ENCODE measurements at regions of chr17 and their contacts with region 1.

Region 1: DNA sequence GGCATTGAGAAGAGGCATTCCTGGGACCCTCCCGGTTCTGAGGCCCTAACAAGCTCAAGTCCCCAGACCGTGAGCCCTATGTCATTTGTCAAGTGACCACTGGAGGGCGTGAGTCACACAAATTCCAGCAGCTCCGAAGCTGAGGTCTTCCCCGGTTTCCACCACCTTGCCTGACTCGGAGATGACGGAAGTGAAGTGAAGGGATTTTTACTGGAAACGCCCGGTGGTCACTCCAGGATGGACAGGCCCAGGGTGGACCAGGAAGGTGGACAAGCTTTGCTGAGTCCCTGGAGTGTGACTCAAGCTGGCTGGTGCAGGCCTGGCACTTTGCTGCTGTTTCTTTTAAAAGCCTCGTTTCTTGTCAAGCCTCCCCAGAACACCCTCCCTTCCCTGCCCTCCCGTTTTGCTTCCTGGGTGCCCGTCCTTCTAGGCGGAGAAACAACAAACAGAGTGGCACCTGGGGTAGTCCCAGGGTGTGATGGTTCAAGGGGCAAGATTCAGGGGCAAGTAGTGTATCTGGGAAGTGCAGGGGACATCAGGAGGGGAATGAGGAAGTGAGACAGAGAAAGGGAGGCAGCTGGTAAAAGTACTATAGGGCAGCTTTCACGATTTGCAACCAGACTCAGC is 5.3 kb upstream of the NOS2 start:
- DNase-seq: peak; percentile 80 to 84 (median 82)
- H3K4me3 ChIP-seq: peak overlapping the region; percentile 5 to 63
- H3K4me3 Mint-ChIP-seq: peak overlapping the region; percentile 82 to 94 (median 86)
- H3K27ac ChIP-seq: peak overlapping the region; percentile 56
- H3K27ac Mint-ChIP-seq: peak overlapping the region; percentile 87 to 98 (median 93)
- H3K4me1 ChIP-seq: peaks cover 36% of the 10 kb centered on the region
- H3K4me1 Mint-ChIP-seq: peaks cover 21 to 46% (median 37%) of the 10 kb centered on the region in 4 donors
- H3K27me3 ChIP-seq: no peaks in the 10 kb centered on the region
- H3K27me3 Mint-ChIP-seq: no peaks in the 10 kb centered on the region

Region 2: DNA sequence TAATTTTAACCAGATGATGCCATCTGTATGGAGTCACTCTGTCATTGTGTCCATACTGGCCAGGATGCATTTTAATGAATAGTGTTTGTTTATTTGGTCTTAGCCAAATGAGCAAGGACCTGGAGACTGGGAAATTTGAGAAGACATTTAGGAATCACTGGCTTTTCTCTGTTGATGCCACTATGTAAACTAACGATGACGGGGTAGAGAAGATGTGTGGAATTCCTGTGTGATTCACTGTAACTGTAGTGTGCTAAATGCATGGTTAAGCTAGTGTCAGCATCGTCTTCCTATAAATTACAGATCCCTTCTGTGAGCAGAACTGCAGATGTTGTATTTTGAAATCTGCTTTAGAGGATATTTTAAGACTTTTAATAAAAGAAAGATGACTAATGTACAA is 71.9 kb before region 1 on chr17:
- CTCF ChIA-PET with region 1: no interaction called
- POLR2A ChIA-PET with region 1: no interaction called
- intact Hi-C with region 1: no loop called
- DNase-seq: no peak
- H3K4me3 ChIP-seq: no peak overlapping the region
- H3K4me3 Mint-ChIP-seq: no peak overlapping the region
- H3K27ac ChIP-seq: no peak overlapping the region
- H3K27ac Mint-ChIP-seq: no peak overlapping the region
- H3K4me1 ChIP-seq: no peaks in the 10 kb centered on the region
- H3K4me1 Mint-ChIP-seq: peaks cover 0 to 3% (median 0%) of the 10 kb centered on the region in 4 donors
- H3K27me3 ChIP-seq: no peaks in the 10 kb centered on the region
- H3K27me3 Mint-ChIP-seq: peaks cover 12 to 16% of the 10 kb centered on the region in 2 donors

Region 3: DNA sequence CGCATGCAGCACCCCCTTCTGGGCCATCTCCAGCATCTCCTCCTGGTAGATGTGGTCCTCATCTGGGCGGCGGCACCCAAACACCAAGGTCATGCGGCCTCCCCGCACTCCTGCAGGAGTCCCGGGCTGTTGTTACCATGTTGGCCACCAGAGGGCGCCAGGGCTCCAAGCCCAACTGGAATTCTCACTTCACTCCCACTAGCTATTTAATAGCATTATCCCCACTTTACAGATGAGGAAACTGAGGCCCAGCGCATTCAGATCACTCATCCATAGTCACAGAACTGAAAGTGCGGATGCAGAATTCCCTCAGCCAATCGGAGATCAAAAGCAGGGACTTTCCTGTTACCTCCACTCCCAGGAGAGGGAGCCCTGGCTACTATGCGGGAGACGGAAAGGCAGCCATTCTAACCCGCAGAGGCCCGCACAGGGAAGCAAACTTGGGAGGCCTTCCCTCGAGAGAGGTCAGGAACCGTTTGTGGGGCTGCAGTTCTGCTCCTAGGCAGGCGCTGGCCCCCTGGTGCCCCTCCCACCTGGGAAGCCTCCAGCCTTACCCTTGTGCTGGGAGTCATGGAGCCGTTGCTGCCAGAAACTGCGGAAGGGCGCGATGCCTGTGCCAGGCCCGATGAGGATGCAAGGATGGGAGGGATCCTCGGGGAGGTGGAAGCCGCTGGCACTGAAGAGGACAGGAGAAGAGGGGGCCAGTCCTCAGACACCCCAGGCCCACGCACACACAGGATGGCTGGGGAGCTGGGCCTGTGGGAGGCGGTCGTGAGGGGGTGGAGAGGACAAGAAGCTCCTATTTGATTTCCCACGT is 45.4 kb before region 1 on chr17:
- CTCF ChIA-PET with region 1: interaction called, 10 read pairs
- POLR2A ChIA-PET with region 1: no interaction called
- intact Hi-C with region 1: no loop called
- DNase-seq: peak; percentile 40 to 63 (median 50)
- H3K4me3 ChIP-seq: no peak overlapping the region
- H3K4me3 Mint-ChIP-seq: no peak overlapping the region
- H3K27ac ChIP-seq: no peak overlapping the region
- H3K27ac Mint-ChIP-seq: no peak overlapping the region
- H3K4me1 ChIP-seq: no peaks in the 10 kb centered on the region
- H3K4me1 Mint-ChIP-seq: peaks cover 0 to 3% (median 0%) of the 10 kb centered on the region in 4 donors
- H3K27me3 ChIP-seq: no peaks in the 10 kb centered on the region
- H3K27me3 Mint-ChIP-seq: peaks cover 2 to 5% of the 10 kb centered on the region in 2 donors

Region 4: GRCh38 chr17:27834571-27834970 is 28.9 kb after region 1 on chr17:
- CTCF ChIA-PET with region 1: interaction called, 10 read pairs
- POLR2A ChIA-PET with region 1: no interaction called
- intact Hi-C with region 1: no loop called
- DNase-seq: no peak
- H3K4me3 ChIP-seq: no peak overlapping the region
- H3K4me3 Mint-ChIP-seq: no peak overlapping the region
- H3K27ac ChIP-seq: no peak overlapping the region
- H3K27ac Mint-ChIP-seq: no peak overlapping the region
- H3K4me1 ChIP-seq: no peaks in the 10 kb centered on the region
- H3K4me1 Mint-ChIP-seq: no peaks in the 10 kb centered on the region
- H3K27me3 ChIP-seq: no peaks in the 10 kb centered on the region
- H3K27me3 Mint-ChIP-seq: no peaks in the 10 kb centered on the region

Region 5: GRCh38 chr17:27879987-27880608 is 74.5 kb after region 1 on chr17:
- CTCF ChIA-PET with region 1: interaction called, 292 read pairs
- POLR2A ChIA-PET with region 1: interaction called, 44 read pairs
- intact Hi-C with region 1: loop called (anchors 1 kb)
- DNase-seq: peak; percentile 50 to 62 (median 54)
- H3K4me3 ChIP-seq: no peak overlapping the region
- H3K4me3 Mint-ChIP-seq: peak overlapping the region in 2 of 8 donors; percentile 15 to 39
- H3K27ac ChIP-seq: no peak overlapping the region
- H3K27ac Mint-ChIP-seq: peak overlapping the region in 2 of 7 donors; percentile 47 to 48
- H3K4me1 ChIP-seq: peaks cover 16% of the 10 kb centered on the region
- H3K4me1 Mint-ChIP-seq: peaks cover 8 to 21% (median 17%) of the 10 kb centered on the region in 4 donors
- H3K27me3 ChIP-seq: no peaks in the 10 kb centered on the region
- H3K27me3 Mint-ChIP-seq: no peaks in the 10 kb centered on the region

Region 6: DNA sequence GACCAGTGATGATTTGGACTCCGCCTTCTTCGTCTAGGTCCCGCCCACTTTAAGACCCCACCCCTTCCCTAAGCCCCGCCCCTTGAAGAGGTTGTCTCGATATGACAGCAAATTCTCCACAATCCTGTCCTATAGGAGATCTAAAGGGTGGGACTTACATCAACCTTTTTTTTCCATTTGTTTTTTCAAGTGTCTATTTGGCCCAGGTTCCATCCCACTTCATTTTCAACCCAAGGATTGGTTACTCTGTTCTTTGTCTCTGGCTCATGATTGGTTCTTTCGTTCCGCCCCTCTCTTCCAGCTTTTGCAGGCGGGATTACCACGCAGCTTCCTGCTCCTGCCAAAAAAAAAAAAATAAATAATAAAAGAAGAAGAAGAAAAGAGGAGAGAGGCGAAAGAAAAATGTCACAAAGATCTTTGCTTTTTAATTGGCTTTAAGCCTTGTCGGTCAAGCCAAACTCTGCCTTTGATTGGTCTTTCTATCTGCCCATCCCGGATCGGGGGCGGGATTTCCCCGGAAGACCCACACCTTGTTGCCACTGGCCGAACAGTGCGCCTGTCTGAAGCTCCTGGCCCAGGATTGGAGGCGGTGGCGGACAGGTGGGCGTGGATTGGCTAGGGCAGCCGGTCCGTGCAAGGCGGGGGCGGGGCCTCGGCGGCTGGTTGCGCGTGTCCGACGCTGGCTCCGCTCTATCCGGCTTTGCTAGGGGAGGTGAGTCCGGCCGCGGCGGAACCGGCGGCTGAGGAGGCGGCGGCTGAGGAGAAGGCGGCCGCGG is 235.6 kb after region 1 on chr17:
- CTCF ChIA-PET with region 1: no interaction called
- POLR2A ChIA-PET with region 1: interaction called, 10 read pairs
- intact Hi-C with region 1: loop called (anchors 2 kb)
- DNase-seq: peak; percentile 99
- H3K4me3 ChIP-seq: peak overlapping the region in 1 of 2 donors; percentile 47
- H3K4me3 Mint-ChIP-seq: peak overlapping the region; percentile 77 to 92 (median 88)
- H3K27ac ChIP-seq: peak overlapping the region; percentile 49
- H3K27ac Mint-ChIP-seq: peak overlapping the region; percentile 80 to 95 (median 86)
- H3K4me1 ChIP-seq: peaks cover 42% of the 10 kb centered on the region
- H3K4me1 Mint-ChIP-seq: peaks cover 41 to 59% (median 49%) of the 10 kb centered on the region in 4 donors
- H3K27me3 ChIP-seq: no peaks in the 10 kb centered on the region
- H3K27me3 Mint-ChIP-seq: no peaks in the 10 kb centered on the region

Region 7: DNA sequence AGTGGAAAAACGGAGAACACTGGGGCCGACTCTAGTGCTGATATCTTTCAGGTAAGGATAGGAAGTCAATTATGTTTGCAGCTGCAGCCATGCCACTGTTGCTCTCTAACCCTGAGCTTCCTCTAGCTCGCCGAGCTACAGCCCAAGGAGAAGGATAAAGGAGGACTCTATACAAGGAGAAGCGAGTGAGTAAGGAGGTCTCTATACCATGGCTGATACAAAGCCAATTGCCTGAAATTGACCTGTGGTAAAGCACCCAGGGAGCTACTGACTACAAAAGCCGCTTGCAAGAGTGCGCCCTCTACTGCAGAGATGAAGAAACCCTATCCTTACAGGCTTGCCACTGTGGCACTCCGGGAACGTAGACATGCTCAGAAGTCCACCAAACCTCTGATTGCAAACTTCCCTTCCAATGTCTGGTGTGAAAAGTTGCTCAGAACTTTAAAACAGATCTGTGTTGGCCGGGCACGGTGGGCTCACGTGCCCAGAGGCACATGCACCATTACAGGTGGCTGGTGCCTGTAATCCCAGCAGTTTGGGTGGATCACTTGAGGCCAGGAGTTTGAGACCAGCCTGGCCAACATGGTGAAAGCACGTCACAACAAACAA is 611.2 kb after region 1 on chr17:
- CTCF ChIA-PET with region 1: interaction called, 7 read pairs
- POLR2A ChIA-PET with region 1: no interaction called
- intact Hi-C with region 1: loop called (anchors 2 kb)
- DNase-seq: peak; percentile 37 to 58 (median 45)
- H3K4me3 ChIP-seq: no peak overlapping the region
- H3K4me3 Mint-ChIP-seq: no peak overlapping the region
- H3K27ac ChIP-seq: no peak overlapping the region
- H3K27ac Mint-ChIP-seq: peak overlapping the region in 1 of 7 donors; percentile 62
- H3K4me1 ChIP-seq: no peaks in the 10 kb centered on the region
- H3K4me1 Mint-ChIP-seq: peaks cover 4 to 7% (median 5%) of the 10 kb centered on the region in 4 donors
- H3K27me3 ChIP-seq: no peaks in the 10 kb centered on the region
- H3K27me3 Mint-ChIP-seq: peaks cover 5 to 19% of the 10 kb centered on the region in 2 donors